Common myeloid progenitor, CD34-positive (primary cell): ENCODE measurements at regions of chr3 and their contacts with region 1.

Region 1: DNA sequence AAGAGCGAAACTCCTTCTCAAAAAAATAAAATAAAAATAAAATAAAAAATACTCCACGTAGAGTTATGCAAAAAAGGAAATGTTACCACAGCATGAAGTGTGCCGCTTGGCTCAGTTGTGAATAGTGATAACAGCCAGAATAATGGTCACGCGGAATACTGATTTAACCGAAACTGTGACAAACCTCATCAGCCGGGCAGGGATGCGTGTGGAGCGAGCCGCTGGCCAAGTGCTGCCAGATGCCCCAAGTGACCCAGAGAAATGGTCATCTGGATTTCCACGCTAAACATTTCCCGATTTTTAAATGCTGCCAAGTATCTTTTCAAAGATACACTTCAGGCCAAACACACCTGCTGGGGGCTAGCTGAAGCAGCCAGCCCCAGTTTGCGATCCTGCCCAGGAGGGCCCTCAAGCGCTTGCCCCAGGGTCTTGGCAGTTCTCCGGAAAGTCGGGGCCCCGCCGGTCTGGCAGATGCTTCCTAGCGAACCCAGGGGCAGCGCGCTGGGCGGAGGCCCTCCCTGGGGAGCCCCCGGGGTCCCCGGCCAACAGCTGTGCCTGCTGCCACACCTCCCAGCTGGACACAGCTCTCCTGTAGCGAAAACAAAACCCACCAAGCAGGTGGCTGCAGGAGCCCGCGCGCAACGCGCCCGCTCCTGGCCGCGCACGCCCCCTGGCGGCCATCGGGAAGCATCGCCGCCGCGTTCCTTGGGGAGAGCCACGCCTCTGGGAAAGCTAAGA is 35.1 kb downstream of the CMTM6 start:
- DNase-seq: peak; percentile 66 to 82 (median 78)
- H3K4me3 ChIP-seq: peak overlapping the region in 4 of 7 experiments; percentile 25 to 65 (median 62)
- H3K27ac ChIP-seq: no peak overlapping the region
- H3K4me1 ChIP-seq: peaks cover 0 to 28% (median 21%) of the 10 kb centered on the region in 4 experiments
- H3K27me3 ChIP-seq: no peaks in the 10 kb centered on the region

Region 2: GRCh38 chr3:32374788-32375595 is 92.5 kb before region 1 on chr3:
- CTCF ChIA-PET with region 1: interaction called, 116 read pairs
- POLR2A ChIA-PET with region 1: interaction called, 3 read pairs
- DNase-seq: peak; percentile 82 to 91 (median 85)
- H3K4me3 ChIP-seq: no peak overlapping the region
- H3K27ac ChIP-seq: no peak overlapping the region
- H3K4me1 ChIP-seq: peaks cover 2 to 7% (median 4%) of the 10 kb centered on the region in 4 experiments
- H3K27me3 ChIP-seq: no peaks in the 10 kb centered on the region

Region 3: GRCh38 chr3:32391643-32392535 is 75.6 kb before region 1 on chr3 and contains the start of gene CMTM7:
- CTCF ChIA-PET with region 1: interaction called, 18 read pairs
- POLR2A ChIA-PET with region 1: no interaction called
- DNase-seq: peak in 2 of 3 donors; percentile 51 to 59
- H3K4me3 ChIP-seq: peak within 1 kb of the TSS; percentile 75 to 90 (median 86)
- H3K27ac ChIP-seq: peak within 1 kb of the TSS in 1 of 2 experiments; percentile 74
- H3K4me1 ChIP-seq: peaks cover 5 to 44% (median 23%) of the 10 kb centered on the region in 4 experiments
- H3K27me3 ChIP-seq: no peaks in the 10 kb centered on the region

Region 4: GRCh38 chr3:32420126-32421038 is 47.1 kb before region 1 on chr3:
- CTCF ChIA-PET with region 1: interaction called, 51 read pairs
- POLR2A ChIA-PET with region 1: interaction called, 3 read pairs
- DNase-seq: peak in 2 of 3 donors; percentile 79 to 84
- H3K4me3 ChIP-seq: peak overlapping the region in 5 of 7 experiments; percentile 13 to 49 (median 24)
- H3K27ac ChIP-seq: peak overlapping the region; percentile 42 to 79
- H3K4me1 ChIP-seq: peaks cover 29 to 82% (median 59%) of the 10 kb centered on the region in 4 experiments
- H3K27me3 ChIP-seq: no peaks in the 10 kb centered on the region

Region 5: DNA sequence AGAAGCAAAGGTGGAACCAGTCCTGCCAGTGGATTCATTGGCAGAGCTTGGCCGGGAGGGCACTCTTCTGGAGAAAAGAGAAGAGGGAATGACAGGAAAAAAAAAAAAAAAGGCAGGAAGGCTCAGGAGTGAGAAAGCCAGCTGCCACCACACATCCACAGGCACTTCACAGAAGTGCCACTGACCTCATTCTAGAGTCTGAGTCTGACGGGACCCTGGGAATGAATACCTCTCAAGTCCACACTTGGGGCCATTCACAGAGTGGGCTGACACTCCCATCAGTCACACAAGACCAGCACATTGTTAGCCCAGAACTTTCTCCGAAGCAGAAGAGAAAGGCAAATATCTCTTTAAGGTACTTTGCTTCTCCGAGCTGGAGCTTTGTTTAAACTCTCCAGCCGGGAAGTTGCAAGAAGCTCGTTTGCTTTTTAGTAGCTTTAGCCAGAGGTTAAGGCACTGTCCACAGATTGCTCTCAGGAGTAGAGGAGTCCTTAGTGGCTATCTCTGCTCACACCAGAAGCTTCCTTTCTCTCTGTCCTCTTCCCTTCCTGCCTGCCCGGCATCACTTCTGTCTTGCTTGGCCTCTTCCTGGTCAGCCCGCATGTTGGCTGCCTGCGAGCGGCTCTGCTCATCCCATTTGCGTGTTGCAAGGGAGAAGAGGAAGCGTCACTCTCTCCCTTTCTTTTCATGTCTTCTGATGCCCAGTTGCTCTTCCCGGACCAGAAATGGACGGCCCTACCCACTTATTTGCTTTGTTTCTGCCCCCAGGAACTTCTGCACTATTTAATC is 18.6 kb before region 1 on chr3:
- CTCF ChIA-PET with region 1: interaction called, 31 read pairs
- POLR2A ChIA-PET with region 1: no interaction called
- DNase-seq: no peak
- H3K4me3 ChIP-seq: no peak overlapping the region
- H3K27ac ChIP-seq: no peak overlapping the region
- H3K4me1 ChIP-seq: no peaks in the 10 kb centered on the region
- H3K27me3 ChIP-seq: no peaks in the 10 kb centered on the region